IMR-90 (cell line): ENCODE measurements at regions of chr12 and their contacts with region 1.

Region 1: GRCh38 chr12:10779103-10779502 is 23.3 kb downstream of the TAS2R7 start:
- DNase-seq: no peak
- ATAC-seq: no peak
- H3K4me3 ChIP-seq: no peak overlapping the region
- H3K27ac ChIP-seq: no peak overlapping the region
- H3K4me1 ChIP-seq: no peaks in the 10 kb centered on the region
- H3K27me3 ChIP-seq: peaks cover 7% of the 10 kb centered on the region
- CTCF ChIP-seq: no peak
- POLR2A ChIP-seq: no peak
- RAD21 ChIP-seq: no peak

Region 2: GRCh38 chr12:10365696-10366405 is 413.3 kb before region 1 on chr12:
- CTCF ChIA-PET with region 1: no interaction called
- POLR2A ChIA-PET with region 1: no interaction called
- dilution Hi-C with region 1: no loop called
- in situ Hi-C with region 1: no loop called
- intact Hi-C with region 1: no loop called
- DNase-seq: peak; percentile 33
- ATAC-seq: no peak
- H3K4me3 ChIP-seq: peak overlapping the region; percentile 54; the same call in 1 of the 2 replicates
- H3K27ac ChIP-seq: peak overlapping the region; percentile 48; the same call in 1 of the 2 replicates
- H3K4me1 ChIP-seq: peaks cover 22% of the 10 kb centered on the region
- H3K27me3 ChIP-seq: no peaks in the 10 kb centered on the region
- CTCF ChIP-seq: 0 out of 2 replicates have a peak, but pooled peaks have one; percentile 17
- POLR2A ChIP-seq: no peak
- RAD21 ChIP-seq: peak; percentile 11; the same call in 1 of the 2 replicates

Region 3: DNA sequence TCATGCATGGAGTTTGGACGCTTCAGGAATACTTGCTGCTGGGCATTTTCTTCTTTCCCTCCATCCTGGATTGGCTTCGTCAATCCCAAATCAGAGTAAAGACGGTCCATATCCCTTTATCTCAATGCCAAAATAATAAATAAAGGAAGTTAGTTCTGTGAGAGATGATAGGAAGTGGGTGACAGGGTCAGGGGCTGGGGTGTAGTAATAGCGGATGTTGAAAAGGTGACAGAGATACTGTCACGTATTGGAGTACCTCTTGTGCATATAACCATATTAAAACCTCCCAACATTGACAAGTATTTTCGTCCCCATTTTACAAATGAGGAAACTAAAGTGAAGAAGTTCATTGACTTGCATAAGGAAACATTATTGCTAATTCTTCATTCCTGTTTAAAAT is 178.1 kb before region 1 on chr12:
- CTCF ChIA-PET with region 1: no interaction called
- POLR2A ChIA-PET with region 1: no interaction called
- dilution Hi-C with region 1: no loop called
- in situ Hi-C with region 1: no loop called
- intact Hi-C with region 1: no loop called
- DNase-seq: no peak
- ATAC-seq: no peak
- H3K4me3 ChIP-seq: no peak overlapping the region
- H3K27ac ChIP-seq: no peak overlapping the region
- H3K4me1 ChIP-seq: no peaks in the 10 kb centered on the region
- H3K27me3 ChIP-seq: no peaks in the 10 kb centered on the region
- CTCF ChIP-seq: no peak
- POLR2A ChIP-seq: no peak
- RAD21 ChIP-seq: no peak

Region 4: DNA sequence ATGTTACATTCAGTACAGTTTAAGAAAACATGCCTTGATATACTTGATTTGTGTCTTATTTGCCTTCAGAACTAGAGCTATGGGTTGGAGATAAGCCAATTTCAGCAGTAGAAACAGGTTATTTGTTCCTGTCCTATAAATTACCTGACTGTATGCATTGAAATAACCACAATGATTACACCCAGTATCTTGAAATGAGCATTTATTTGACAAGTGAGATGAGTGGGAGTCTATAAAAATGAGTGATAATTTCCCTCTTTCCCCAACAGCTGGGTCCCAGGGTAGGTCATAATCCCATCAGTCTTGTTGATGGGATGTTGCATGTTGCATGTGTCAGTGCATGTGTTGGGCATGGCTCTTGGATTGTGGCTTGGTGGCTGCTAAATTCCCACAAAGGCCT is 403.9 kb after region 1 on chr12:
- CTCF ChIA-PET with region 1: no interaction called
- POLR2A ChIA-PET with region 1: no interaction called
- dilution Hi-C with region 1: loop called (anchors 25 kb)
- in situ Hi-C with region 1: no loop called
- intact Hi-C with region 1: no loop called
- DNase-seq: no peak
- ATAC-seq: no peak
- H3K4me3 ChIP-seq: no peak overlapping the region
- H3K27ac ChIP-seq: no peak overlapping the region
- H3K4me1 ChIP-seq: no peaks in the 10 kb centered on the region
- H3K27me3 ChIP-seq: no peaks in the 10 kb centered on the region
- CTCF ChIP-seq: no peak
- POLR2A ChIP-seq: no peak
- RAD21 ChIP-seq: no peak

Region 5: GRCh38 chr12:11202811-11203210 is 423.7 kb after region 1 on chr12:
- CTCF ChIA-PET with region 1: interaction called, 11 read pairs
- POLR2A ChIA-PET with region 1: no interaction called
- dilution Hi-C with region 1: loop called (anchors 25 kb)
- in situ Hi-C with region 1: loop called (anchors 5 kb)
- intact Hi-C with region 1: no loop called
- DNase-seq: no peak
- ATAC-seq: no peak
- H3K4me3 ChIP-seq: no peak overlapping the region
- H3K27ac ChIP-seq: no peak overlapping the region
- H3K4me1 ChIP-seq: no peaks in the 10 kb centered on the region
- H3K27me3 ChIP-seq: no peaks in the 10 kb centered on the region; the same call in 1 of the 2 replicates
- CTCF ChIP-seq: no peak
- POLR2A ChIP-seq: no peak
- RAD21 ChIP-seq: no peak